ENCODE measurements at regions of chr12 and their contacts with region 1.

Region 1: DNA sequence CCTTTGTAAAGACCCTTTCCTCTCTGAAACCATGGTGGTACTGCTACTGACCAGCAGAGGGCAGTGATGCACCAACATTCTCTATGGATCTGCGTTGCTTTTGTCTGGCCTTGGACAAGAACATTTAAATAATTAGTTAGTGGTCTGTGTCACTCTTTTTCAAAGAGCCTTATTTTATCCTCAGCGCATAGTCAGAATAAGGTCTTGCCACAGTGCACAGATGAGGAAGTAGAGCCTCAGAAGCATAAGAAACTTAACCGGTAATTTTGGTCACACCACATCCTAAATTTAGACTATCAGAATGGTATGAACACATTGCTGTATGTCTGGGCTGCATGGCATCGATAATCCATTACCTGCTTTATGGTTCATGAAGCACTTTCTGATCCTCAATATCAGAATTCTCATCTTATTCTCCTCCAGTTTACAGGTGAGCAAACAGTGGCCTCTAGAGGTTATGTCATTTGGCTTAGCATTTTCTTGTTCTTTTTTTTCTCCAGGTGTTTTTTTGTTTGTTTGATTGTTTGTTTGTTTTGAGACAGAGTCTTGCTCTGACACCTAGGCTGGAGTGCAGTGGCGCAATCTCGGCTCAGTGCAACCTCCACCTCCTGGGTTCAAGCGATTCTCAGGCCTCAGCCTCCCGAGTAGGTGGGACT is 23.7 kb upstream of the IFT81 start:
- DNase-seq: peak; percentile 61 to 88 (median 70)
- H3K4me3 ChIP-seq: peak overlapping the region in 11 of 59 donors; percentile 1 to 27 (median 11)
- H3K27ac ChIP-seq: peak overlapping the region in 58 of 59 donors; percentile 25 to 91 (median 78)
- H3K27me3 ChIP-seq: no peaks in the 10 kb centered on the region
- CTCF ChIP-seq: peak; percentile 78 to 98 (median 94)

Region 2: GRCh38 chr12:109899783-109900751 is 200.4 kb before region 1 on chr12 and contains the start of gene TCHP:
- intact Hi-C with region 1: loop called in 1 of 2 experiments (anchors 10 kb)
- DNase-seq: peak; percentile 80 to 91 (median 88)
- H3K4me3 ChIP-seq: peak within 1 kb of the TSS; percentile 64 to 99 (median 88)
- H3K27ac ChIP-seq: peak within 1 kb of the TSS in 57 of 59 donors; percentile 33 to 91 (median 79)
- H3K27me3 ChIP-seq: no peaks in the 10 kb centered on the region
- CTCF ChIP-seq: peak; percentile 22 to 75 (median 60)
- total RNA-seq, gene TCHP: 18.4 to 41.8 (median 27.7) TPM

Region 3: GRCh38 chr12:110126557-110126956 is 26.1 kb after region 1 on chr12:
- intact Hi-C with region 1: no loop called
- DNase-seq: no peak
- H3K4me3 ChIP-seq: peak overlapping the region in 19 of 59 donors; percentile 1 to 97 (median 17)
- H3K27ac ChIP-seq: peak overlapping the region in 19 of 59 donors; percentile 4 to 94 (median 40)
- H3K27me3 ChIP-seq: no peaks in the 10 kb centered on the region
- CTCF ChIP-seq: no peak

Region 4: GRCh38 chr12:110180591-110181005 is 80.2 kb after region 1 on chr12:
- intact Hi-C with region 1: loop called (anchors 2 to 5 kb)
- DNase-seq: no peak
- H3K4me3 ChIP-seq: no peak overlapping the region
- H3K27ac ChIP-seq: peak overlapping the region in 3 of 59 donors; percentile 10 to 31 (median 12)
- H3K27me3 ChIP-seq: no peaks in the 10 kb centered on the region
- CTCF ChIP-seq: no peak

Region 5: GRCh38 chr12:110431957-110432587 is 331.6 kb after region 1 on chr12:
- intact Hi-C with region 1: loop called (anchors 2 kb)
- DNase-seq: no peak
- H3K4me3 ChIP-seq: peak overlapping the region; percentile 26 to 73 (median 59)
- H3K27ac ChIP-seq: peak overlapping the region in 52 of 59 donors; percentile 9 to 84 (median 71)
- H3K27me3 ChIP-seq: no peaks in the 10 kb centered on the region
- CTCF ChIP-seq: no peak

Measured in dorsolateral prefrontal cortex (tissue), 120 donors.